Activated CD8-positive, alpha-beta T cell treated with anti-CD3 and anti-CD28 coated beads for 36 hours (primary cell): ENCODE measurements at regions of chr5 and their contacts with region 1.

Region 1: DNA sequence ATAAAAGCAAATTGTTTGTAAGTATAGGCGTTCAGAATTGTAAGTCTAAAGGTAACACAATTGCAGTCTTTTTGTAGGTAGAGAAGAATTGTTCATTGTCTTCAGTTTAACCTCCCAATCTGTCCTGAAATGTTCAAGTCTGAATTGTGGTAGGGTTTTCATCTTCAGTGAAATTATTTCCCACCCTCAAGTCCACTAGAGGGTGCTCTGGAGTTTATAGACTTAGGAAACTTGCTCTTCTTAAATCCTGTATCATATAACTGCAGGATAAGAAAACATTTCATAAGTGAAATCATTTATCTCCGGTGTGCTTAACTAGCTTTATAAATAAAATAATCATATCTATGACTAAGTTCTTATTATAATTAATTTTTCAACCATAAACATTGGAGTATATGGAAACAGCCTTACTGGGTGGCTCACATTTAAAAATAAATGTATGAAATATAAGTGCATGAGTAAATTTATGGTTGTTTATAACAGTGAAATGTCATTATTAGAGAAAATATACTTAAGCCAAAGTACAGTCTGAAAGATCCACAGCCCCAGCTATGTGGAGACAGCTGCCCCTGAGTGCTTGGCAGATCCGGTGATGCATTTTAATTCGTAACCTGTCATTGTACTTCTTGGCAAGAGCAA is 182.4 kb upstream of the OTULINL start:
- DNase-seq: peak; percentile 38
- ATAC-seq: peak; percentile 64
- H3K4me3 Mint-ChIP-seq: no peak overlapping the region
- H3K27ac Mint-ChIP-seq: no peak overlapping the region
- H3K4me1 Mint-ChIP-seq: peaks cover 29% of the 10 kb centered on the region
- H3K27me3 Mint-ChIP-seq: no peaks in the 10 kb centered on the region
- CTCF ChIP-seq: peak; percentile 92

Region 2: GRCh38 chr5:14383923-14384322 is 15.2 kb before region 1 on chr5:
- CTCF ChIA-PET with region 1: interaction called, 20 read pairs
- POLR2A ChIA-PET with region 1: no interaction called
- intact Hi-C with region 1: no loop called
- DNase-seq: no peak
- ATAC-seq: no peak
- H3K4me3 Mint-ChIP-seq: no peak overlapping the region
- H3K27ac Mint-ChIP-seq: no peak overlapping the region
- H3K4me1 Mint-ChIP-seq: peaks cover 9% of the 10 kb centered on the region
- H3K27me3 Mint-ChIP-seq: no peaks in the 10 kb centered on the region
- CTCF ChIP-seq: no peak

Region 3: DNA sequence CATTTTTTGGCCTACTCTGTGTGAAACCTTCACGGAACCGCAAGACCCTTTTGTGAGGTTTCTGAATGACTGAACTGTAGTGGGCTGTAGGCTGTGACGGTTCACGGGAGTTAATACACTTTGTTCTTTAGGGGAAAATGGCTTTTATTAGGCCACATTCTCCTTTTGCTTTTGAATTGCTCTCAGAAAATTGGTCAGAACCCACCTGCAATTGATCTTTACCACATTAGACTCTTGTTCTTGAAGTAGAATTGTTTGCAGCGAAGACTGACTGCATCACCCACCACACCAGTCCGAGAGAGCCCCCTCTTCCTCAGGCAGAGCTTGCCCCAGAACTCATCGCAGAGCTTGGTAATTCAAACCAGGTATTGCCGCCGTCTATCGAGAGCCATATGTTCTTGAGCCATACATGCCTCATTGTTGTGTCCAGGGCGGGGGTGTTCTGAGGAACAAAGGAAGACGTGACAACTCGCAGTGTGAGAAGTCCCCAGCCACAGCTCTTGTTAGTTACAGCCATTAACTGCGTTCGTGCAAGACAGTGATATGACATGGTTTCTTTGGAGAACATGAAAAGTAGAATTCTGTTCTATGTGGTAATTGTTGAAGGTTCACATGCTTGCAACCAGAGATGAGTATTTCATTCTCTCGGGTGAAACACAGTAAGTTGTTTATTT is 16.0 kb after region 1 on chr5:
- CTCF ChIA-PET with region 1: interaction called, 34 read pairs
- POLR2A ChIA-PET with region 1: interaction called, 3 read pairs
- intact Hi-C with region 1: no loop called
- DNase-seq: peak; percentile 85
- ATAC-seq: peak; percentile 58
- H3K4me3 Mint-ChIP-seq: peak overlapping the region; percentile 67
- H3K27ac Mint-ChIP-seq: peak overlapping the region; percentile 98
- H3K4me1 Mint-ChIP-seq: peaks cover 57% of the 10 kb centered on the region
- H3K27me3 Mint-ChIP-seq: no peaks in the 10 kb centered on the region
- CTCF ChIP-seq: no peak

Region 4: GRCh38 chr5:14581333-14581890 is 182.2 kb after region 1 on chr5 and contains the start of gene OTULINL:
- CTCF ChIA-PET with region 1: interaction called, 17 read pairs
- POLR2A ChIA-PET with region 1: no interaction called
- intact Hi-C with region 1: loop called (anchors 5 kb)
- DNase-seq: peak; percentile 90
- ATAC-seq: peak; percentile 96
- H3K4me3 Mint-ChIP-seq: peak within 1 kb of the TSS; percentile 79
- H3K27ac Mint-ChIP-seq: peak within 1 kb of the TSS; percentile 75
- H3K4me1 Mint-ChIP-seq: peaks cover 41% of the 10 kb centered on the region
- H3K27me3 Mint-ChIP-seq: peaks cover 10% of the 10 kb centered on the region
- CTCF ChIP-seq: no peak
- total RNA-seq, gene OTULINL: 19.7 to 21.1 TPM

Region 5: DNA sequence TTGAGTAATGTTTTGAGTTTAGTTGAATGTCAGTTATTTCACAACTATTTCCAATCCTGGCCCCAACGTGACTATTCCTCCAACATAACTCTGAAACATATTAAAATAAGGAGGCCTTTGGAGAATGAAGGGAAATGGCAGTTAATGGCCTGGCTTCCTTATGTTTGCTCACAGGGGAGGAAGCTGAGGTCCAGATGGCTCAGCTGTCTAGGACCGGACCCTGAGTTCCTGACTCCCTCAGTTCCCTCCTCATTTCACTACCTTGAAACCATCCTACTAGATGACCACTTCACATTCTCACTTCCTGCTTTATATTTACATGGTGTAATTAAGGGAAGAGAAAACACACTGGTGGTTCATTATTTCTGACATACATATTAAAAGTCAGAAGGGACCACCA is 189.0 kb after region 1 on chr5:
- CTCF ChIA-PET with region 1: interaction called, 5 read pairs
- POLR2A ChIA-PET with region 1: interaction called, 3 read pairs
- intact Hi-C with region 1: loop called (anchors 5 kb)
- DNase-seq: no peak
- ATAC-seq: no peak
- H3K4me3 Mint-ChIP-seq: no peak overlapping the region
- H3K27ac Mint-ChIP-seq: peak overlapping the region; percentile 8
- H3K4me1 Mint-ChIP-seq: peaks cover 90% of the 10 kb centered on the region
- H3K27me3 Mint-ChIP-seq: no peaks in the 10 kb centered on the region
- CTCF ChIP-seq: no peak

Region 6: GRCh38 chr5:14650052-14650451 is 250.9 kb after region 1 on chr5:
- CTCF ChIA-PET with region 1: interaction called, 121 read pairs
- POLR2A ChIA-PET with region 1: no interaction called
- intact Hi-C with region 1: loop called (anchors 1 kb)
- DNase-seq: no peak
- ATAC-seq: no peak
- H3K4me3 Mint-ChIP-seq: no peak overlapping the region
- H3K27ac Mint-ChIP-seq: no peak overlapping the region
- H3K4me1 Mint-ChIP-seq: peaks cover 1% of the 10 kb centered on the region
- H3K27me3 Mint-ChIP-seq: peaks cover 15% of the 10 kb centered on the region
- CTCF ChIP-seq: no peak

Region 7: GRCh38 chr5:14655146-14655741 is 256.1 kb after region 1 on chr5:
- CTCF ChIA-PET with region 1: interaction called, 121 read pairs
- POLR2A ChIA-PET with region 1: no interaction called
- intact Hi-C with region 1: no loop called
- DNase-seq: no peak
- ATAC-seq: peak; percentile 17
- H3K4me3 Mint-ChIP-seq: no peak overlapping the region
- H3K27ac Mint-ChIP-seq: no peak overlapping the region
- H3K4me1 Mint-ChIP-seq: peaks cover 35% of the 10 kb centered on the region
- H3K27me3 Mint-ChIP-seq: peaks cover 4% of the 10 kb centered on the region
- CTCF ChIP-seq: no peak